BJ (cell line): ENCODE measurements at regions of chr10 and their contacts with region 1.

Region 1: GRCh38 chr10:7955446-7955845 is 99.0 kb upstream of the GATA3 start:
- DNase-seq: peak; percentile 44
- H3K4me3 ChIP-seq: no peak overlapping the region
- H3K27me3 ChIP-seq: no peaks in the 10 kb centered on the region
- CTCF ChIP-seq: no peak

Region 2: DNA sequence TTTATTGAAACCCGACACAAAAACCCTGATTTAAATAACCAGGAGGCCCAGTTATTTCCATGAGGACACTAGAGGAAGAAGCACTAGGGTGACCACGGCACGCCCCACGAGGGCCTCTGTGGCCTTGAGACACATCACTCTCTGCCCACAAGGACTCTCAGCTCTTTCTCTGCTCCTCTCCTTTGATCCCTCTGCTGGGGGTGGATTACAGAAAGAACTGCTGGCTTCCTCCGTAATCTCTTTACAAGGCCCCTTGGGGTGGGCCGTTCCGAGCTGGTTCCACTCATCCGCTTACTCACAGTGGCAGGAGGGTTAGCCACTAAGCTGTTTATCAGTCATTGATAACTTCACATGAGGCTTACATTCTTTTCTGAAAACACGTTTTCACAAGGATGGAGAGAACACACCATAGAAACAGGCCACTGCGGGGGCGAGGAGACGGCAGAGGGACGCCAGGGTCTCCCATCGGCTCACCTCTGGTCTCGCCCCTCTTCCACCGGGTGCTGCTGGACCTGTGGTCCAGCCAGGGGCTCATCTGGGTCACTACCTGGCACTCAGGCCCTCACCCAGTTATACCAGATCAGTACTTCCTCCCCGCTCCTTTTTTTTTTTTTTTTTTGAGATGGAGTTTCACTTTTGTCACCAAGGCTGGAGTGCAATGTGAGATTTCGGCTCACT is 1770.3 kb before region 1 on chr10:
- CTCF ChIA-PET with region 1: no interaction called
- POLR2A ChIA-PET with region 1: interaction called, 12 read pairs
- DNase-seq: no peak
- H3K4me3 ChIP-seq: no peak overlapping the region
- H3K27me3 ChIP-seq: no peaks in the 10 kb centered on the region
- CTCF ChIP-seq: no peak